ENCODE measurements at regions of chr4 and their contacts with region 1.

Region 1: DNA sequence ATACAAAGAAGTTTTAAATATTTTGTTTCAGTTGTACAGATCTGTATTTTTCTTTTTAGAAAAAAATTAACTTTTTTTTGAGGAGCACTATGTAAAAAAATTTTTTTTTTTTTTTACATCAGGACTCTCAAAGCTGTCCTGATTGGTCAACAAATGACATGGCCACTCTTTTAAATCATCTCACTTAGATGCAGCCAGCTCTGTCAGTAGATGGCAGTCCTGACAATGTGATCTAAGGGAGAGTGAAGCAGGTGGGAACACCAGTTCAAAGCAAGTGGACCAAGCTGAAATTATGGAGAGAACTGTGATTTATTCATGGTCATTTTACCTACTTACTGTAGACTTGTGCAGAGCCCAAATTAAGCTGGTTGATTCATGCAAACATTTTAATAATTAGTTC is 174.6 kb upstream of the GPRIN3 start:
- DNase-seq: peak; percentile 40 to 43
- H3K4me3 ChIP-seq: no peak overlapping the region
- H3K4me3 Mint-ChIP-seq: no peak overlapping the region
- H3K27ac Mint-ChIP-seq: no peak overlapping the region
- H3K4me1 ChIP-seq: no peaks in the 10 kb centered on the region
- H3K4me1 Mint-ChIP-seq: no peaks in the 10 kb centered on the region
- H3K27me3 ChIP-seq: no peaks in the 10 kb centered on the region
- H3K27me3 Mint-ChIP-seq: peaks cover 3% of the 10 kb centered on the region
- CTCF ChIP-seq: peak in 1 of 2 experiments; percentile 38

Region 2: DNA sequence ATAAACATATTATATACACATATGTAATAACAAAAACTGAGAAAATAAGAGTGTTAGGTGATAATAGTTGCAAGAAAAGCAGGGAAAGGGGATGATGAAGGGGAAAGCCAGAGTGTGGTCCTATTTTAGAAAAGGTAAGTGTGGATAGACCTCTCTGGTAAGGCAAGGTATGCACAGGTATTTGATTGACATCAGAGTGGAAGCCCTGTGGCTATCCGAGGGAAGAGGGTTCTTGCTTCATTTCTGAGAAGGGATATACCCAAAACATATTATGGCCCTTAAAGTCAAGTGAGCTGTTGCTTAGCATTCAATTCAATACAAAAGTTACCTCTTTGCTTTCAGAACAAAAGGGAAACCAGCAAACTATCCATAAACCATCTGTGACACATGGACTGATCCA is 39.0 kb after region 1 on chr4:
- CTCF ChIA-PET with region 1: no interaction called
- POLR2A ChIA-PET with region 1: no interaction called
- intact Hi-C with region 1: no loop called
- DNase-seq: no peak
- H3K4me3 ChIP-seq: no peak overlapping the region
- H3K4me3 Mint-ChIP-seq: no peak overlapping the region
- H3K27ac Mint-ChIP-seq: no peak overlapping the region
- H3K4me1 ChIP-seq: no peaks in the 10 kb centered on the region
- H3K4me1 Mint-ChIP-seq: no peaks in the 10 kb centered on the region
- H3K27me3 ChIP-seq: no peaks in the 10 kb centered on the region
- H3K27me3 Mint-ChIP-seq: peaks cover 12% of the 10 kb centered on the region
- CTCF ChIP-seq: no peak

Region 3: GRCh38 chr4:89598602-89599001 is 116.4 kb after region 1 on chr4:
- CTCF ChIA-PET with region 1: no interaction called
- POLR2A ChIA-PET with region 1: no interaction called
- intact Hi-C with region 1: loop called (anchors 10 kb)
- DNase-seq: peak in 1 of 2 experiments; percentile 9
- H3K4me3 ChIP-seq: no peak overlapping the region
- H3K4me3 Mint-ChIP-seq: no peak overlapping the region
- H3K27ac Mint-ChIP-seq: no peak overlapping the region
- H3K4me1 ChIP-seq: no peaks in the 10 kb centered on the region
- H3K4me1 Mint-ChIP-seq: no peaks in the 10 kb centered on the region
- H3K27me3 ChIP-seq: no peaks in the 10 kb centered on the region
- H3K27me3 Mint-ChIP-seq: peaks cover 3% of the 10 kb centered on the region
- CTCF ChIP-seq: peak; percentile 40 to 45

Region 4: GRCh38 chr4:89868999-89869589 is 386.8 kb after region 1 on chr4:
- CTCF ChIA-PET with region 1: no interaction called
- POLR2A ChIA-PET with region 1: no interaction called
- intact Hi-C with region 1: loop called (anchors 10 kb)
- DNase-seq: no peak
- H3K4me3 ChIP-seq: no peak overlapping the region
- H3K4me3 Mint-ChIP-seq: no peak overlapping the region
- H3K27ac Mint-ChIP-seq: no peak overlapping the region
- H3K4me1 ChIP-seq: peaks cover 5% of the 10 kb centered on the region; the same call in 1 of the 2 replicates
- H3K4me1 Mint-ChIP-seq: peaks cover 6% of the 10 kb centered on the region
- H3K27me3 ChIP-seq: no peaks in the 10 kb centered on the region
- H3K27me3 Mint-ChIP-seq: no peaks in the 10 kb centered on the region
- CTCF ChIP-seq: peak in 1 of 2 experiments; percentile 49

Measured in Caco-2 (cell line).